CD14-positive monocyte (primary cell): ENCODE measurements at regions of chr5 and their contacts with region 1.

Region 1: DNA sequence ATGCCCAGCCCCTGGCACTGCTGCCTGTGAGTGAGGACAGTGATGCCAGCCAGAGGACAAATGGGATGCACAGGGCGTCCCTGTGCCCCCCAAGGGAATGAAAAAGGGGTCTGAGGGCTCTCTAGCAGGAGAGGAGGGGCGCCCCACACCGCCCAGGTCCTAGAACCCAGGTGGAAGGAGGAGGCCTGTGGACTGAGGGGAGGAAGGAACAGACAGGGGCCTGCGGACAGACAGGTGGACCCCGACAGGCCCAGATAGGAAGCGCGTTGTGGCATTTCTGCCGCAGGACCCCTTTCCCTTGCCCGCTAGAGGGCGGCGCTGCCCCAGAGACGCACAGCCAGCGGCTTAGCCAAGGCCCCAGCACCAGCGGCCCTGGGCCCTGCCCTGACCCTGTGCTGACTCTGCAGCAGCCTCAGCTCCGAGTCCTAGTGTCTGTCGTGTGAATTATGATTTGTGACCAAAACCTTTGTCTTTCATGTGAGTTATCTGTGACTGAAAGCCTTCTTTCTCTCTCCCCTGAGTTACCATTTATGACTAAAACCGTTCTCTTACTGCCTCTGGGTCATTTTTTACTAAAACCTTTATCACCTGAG is 30.7 kb downstream of the TRIP13 start:
- DNase-seq: peak; percentile 26 to 52 (median 47)
- H3K4me3 ChIP-seq: no peak overlapping the region
- H3K4me3 Mint-ChIP-seq: no peak overlapping the region
- H3K27ac ChIP-seq: no peak overlapping the region
- H3K27ac Mint-ChIP-seq: no peak overlapping the region
- H3K4me1 ChIP-seq: no peaks in the 10 kb centered on the region
- H3K4me1 Mint-ChIP-seq: peaks cover 2% of the 10 kb centered on the region
- H3K27me3 ChIP-seq: peaks cover 12 to 30% of the 10 kb centered on the region in 2 donors
- H3K27me3 Mint-ChIP-seq: peaks cover 26 to 37% (median 28%) of the 10 kb centered on the region in 3 donors
- CTCF ChIP-seq: peak; percentile 72

Region 2: GRCh38 chr5:1140171-1140817 is 216.9 kb after region 1 on chr5:
- intact Hi-C with region 1: loop called (anchors 2 to 10 kb)
- DNase-seq: peak; percentile 29 to 63 (median 62)
- H3K4me3 ChIP-seq: no peak overlapping the region
- H3K4me3 Mint-ChIP-seq: no peak overlapping the region
- H3K27ac ChIP-seq: no peak overlapping the region
- H3K27ac Mint-ChIP-seq: no peak overlapping the region
- H3K4me1 ChIP-seq: peaks cover 12 to 13% of the 10 kb centered on the region in 2 donors
- H3K4me1 Mint-ChIP-seq: peaks cover 19% of the 10 kb centered on the region
- H3K27me3 ChIP-seq: no peaks in the 10 kb centered on the region
- H3K27me3 Mint-ChIP-seq: peaks cover 2 to 13% (median 11%) of the 10 kb centered on the region in 3 donors
- CTCF ChIP-seq: peak; percentile 84

Region 3: GRCh38 chr5:1174122-1174936 is 251.0 kb after region 1 on chr5:
- intact Hi-C with region 1: loop called (anchors 10 kb)
- DNase-seq: peak; percentile 6 to 60 (median 29)
- H3K4me3 ChIP-seq: no peak overlapping the region
- H3K4me3 Mint-ChIP-seq: no peak overlapping the region
- H3K27ac ChIP-seq: no peak overlapping the region
- H3K27ac Mint-ChIP-seq: peak overlapping the region in 1 of 7 donors; percentile 33
- H3K4me1 ChIP-seq: no peaks in the 10 kb centered on the region
- H3K4me1 Mint-ChIP-seq: no peaks in the 10 kb centered on the region
- H3K27me3 ChIP-seq: no peaks in the 10 kb centered on the region
- H3K27me3 Mint-ChIP-seq: peaks cover 5 to 22% (median 13%) of the 10 kb centered on the region in 3 donors
- CTCF ChIP-seq: peak; percentile 72

Region 4: GRCh38 chr5:1652596-1653345 is 729.4 kb after region 1 on chr5:
- intact Hi-C with region 1: loop called in 1 of 2 experiments (anchors 10 kb)
- DNase-seq: no peak
- H3K4me3 ChIP-seq: no peak overlapping the region
- H3K4me3 Mint-ChIP-seq: peak overlapping the region in 1 of 2 donors; percentile 69
- H3K27ac ChIP-seq: no peak overlapping the region
- H3K27ac Mint-ChIP-seq: no peak overlapping the region
- H3K4me1 ChIP-seq: no peaks in the 10 kb centered on the region
- H3K4me1 Mint-ChIP-seq: peaks cover 9% of the 10 kb centered on the region
- H3K27me3 ChIP-seq: peaks cover 0 to 22% of the 10 kb centered on the region in 2 donors
- H3K27me3 Mint-ChIP-seq: peaks cover 28 to 63% (median 43%) of the 10 kb centered on the region in 3 donors
- CTCF ChIP-seq: no peak

Region 5: DNA sequence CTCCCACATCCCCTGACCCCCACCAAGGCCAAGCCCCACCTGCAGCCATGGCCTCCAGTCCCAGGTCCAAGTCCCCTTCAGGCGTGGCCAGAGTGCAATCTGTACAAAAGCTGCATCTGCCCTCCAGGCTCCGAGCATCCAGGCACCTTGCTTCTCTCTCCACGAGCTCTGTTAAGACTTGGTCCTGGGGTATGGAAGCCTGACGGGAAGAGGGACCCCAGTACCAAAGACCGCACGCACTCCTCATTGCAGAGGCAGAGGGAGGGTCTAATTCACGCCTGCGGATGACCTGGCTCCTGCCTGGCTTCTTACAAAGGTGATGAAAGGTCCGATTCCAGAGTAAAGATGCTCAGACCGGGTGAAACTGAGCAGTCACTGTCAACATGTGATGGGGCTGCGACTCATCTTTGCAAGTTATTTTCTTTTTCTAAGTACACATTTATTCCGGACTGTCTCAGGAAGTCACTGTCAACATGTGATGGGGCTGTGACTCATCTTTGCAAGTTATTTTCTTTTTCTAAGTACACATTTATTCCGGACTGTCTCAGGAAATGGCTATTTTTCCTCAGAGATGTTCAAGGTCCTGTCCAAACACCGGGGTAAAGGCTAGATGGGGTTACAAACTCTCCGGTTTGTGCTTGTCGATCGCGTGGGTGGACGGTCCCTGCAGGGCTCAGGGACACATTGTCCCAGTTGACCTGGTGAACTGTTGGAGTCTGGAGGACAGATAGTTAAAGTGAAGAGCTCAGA is 1211.3 kb after region 1 on chr5:
- intact Hi-C with region 1: no loop called
- DNase-seq: no peak
- H3K4me3 ChIP-seq: no peak overlapping the region
- H3K4me3 Mint-ChIP-seq: no peak overlapping the region
- H3K27ac ChIP-seq: no peak overlapping the region
- H3K27ac Mint-ChIP-seq: peak overlapping the region in 1 of 7 donors; percentile 10
- H3K4me1 ChIP-seq: no peaks in the 10 kb centered on the region
- H3K4me1 Mint-ChIP-seq: no peaks in the 10 kb centered on the region
- H3K27me3 ChIP-seq: no peaks in the 10 kb centered on the region
- H3K27me3 Mint-ChIP-seq: peaks cover 1 to 3% (median 2%) of the 10 kb centered on the region in 3 donors
- CTCF ChIP-seq: no peak